T-cell (primary cell): ENCODE measurements at regions of chr16 and their contacts with region 1.

Region 1: DNA sequence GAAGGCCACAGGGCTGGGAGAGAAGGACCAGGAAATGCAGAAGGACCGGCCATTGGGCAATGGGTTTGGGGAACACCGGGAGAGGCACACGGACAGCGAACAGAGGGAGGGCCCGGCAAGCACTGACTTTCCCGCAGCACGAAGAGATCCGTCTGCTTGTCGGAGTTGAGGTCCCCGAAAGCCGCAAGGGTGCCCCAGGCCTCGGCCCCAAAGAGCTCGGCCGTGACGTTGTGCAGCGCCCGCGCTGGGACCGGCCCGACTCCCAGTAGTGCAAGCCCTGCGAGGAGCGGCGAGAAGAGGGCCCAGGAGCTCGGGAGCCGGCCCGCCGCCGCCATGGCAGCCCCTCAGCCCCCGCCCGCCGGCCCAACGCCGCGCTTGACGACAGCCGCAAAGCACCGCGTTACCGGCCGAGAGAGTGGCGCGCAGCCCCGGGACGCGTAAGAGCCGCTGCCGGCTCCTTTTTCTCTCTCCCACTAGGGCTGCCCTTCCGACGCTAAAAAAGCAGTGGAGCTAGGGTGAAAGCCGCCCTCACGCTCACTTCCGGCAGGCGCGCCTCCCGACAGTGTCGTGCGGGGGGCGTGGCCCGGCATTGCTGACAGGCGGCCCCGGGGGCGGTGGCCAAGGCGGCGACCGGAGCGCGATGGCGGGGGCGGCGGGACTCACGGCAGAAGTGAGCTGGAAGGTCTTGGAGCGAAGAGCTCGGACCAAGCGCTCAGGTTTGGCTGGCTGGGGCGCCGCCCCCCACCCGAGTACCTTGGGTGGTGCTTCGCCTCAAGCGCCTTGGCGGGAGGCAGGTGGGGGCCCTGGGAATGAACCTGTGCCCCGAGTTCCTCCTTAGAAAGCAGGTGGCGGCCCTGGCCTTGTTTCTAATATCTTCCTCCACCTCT is at the starts of genes ITFG1 and PHKB:
- DNase-seq: peak; percentile 91 to 98 (median 97)
- ATAC-seq: peak; percentile 93 to 96 (median 96)
- H3K4me3 ChIP-seq: peak within 1 kb of the TSS; percentile 73 to 99
- H3K4me3 Mint-ChIP-seq: peak within 1 kb of the TSS; percentile 92 to 98 (median 93)
- H3K27ac ChIP-seq: peak within 1 kb of the TSS; percentile 92
- H3K27ac Mint-ChIP-seq: peak within 1 kb of the TSS; percentile 91 to 97
- H3K4me1 ChIP-seq: peaks cover 19 to 32% of the 10 kb centered on the region in 2 experiments
- H3K4me1 Mint-ChIP-seq: peaks cover 68 to 74% (median 73%) of the 10 kb centered on the region in 3 donors
- H3K27me3 ChIP-seq: no peaks in the 10 kb centered on the region
- H3K27me3 Mint-ChIP-seq: no peaks in the 10 kb centered on the region
- total RNA-seq, gene ITFG1: 17.6 to 33.9 (median 22.6) TPM
- total RNA-seq, gene PHKB: 40.6 to 67.5 (median 48.8) TPM

Region 2: DNA sequence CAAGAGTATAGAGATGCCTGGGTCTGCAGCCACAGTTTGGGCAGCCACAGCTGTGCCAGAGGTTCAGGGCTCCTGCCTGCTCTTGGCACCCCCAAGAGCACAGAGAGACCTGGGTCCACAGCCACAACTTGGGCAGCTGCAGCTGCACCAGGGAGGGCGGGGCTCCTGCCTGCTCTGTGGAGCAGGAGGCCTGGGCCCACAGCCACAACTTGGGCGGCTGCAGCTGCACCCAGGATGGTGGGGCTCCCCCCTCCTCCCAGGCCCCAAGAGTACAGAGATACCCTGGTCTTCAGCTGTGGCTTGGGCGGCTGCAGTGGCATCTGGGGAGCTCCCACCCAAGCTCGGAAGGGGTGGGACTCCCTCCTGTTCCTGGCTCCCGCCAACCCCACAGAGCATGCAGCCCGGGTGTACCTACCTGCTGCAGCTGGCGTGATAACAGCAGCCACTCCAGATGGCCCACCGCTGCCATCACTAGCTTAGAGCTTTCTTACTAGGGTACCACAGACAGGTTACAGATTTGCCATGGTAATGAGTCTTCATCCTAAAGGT is 72.9 kb after region 1 on chr16:
- CTCF ChIA-PET with region 1: no interaction called
- POLR2A ChIA-PET with region 1: interaction called in 1 of 2 experiments, 10 read pairs
- DNase-seq: no peak
- ATAC-seq: no peak
- H3K4me3 ChIP-seq: no peak overlapping the region
- H3K4me3 Mint-ChIP-seq: no peak overlapping the region
- H3K27ac ChIP-seq: no peak overlapping the region
- H3K27ac Mint-ChIP-seq: no peak overlapping the region
- H3K4me1 ChIP-seq: no peaks in the 10 kb centered on the region
- H3K4me1 Mint-ChIP-seq: peaks cover 4 to 14% (median 12%) of the 10 kb centered on the region in 3 donors
- H3K27me3 ChIP-seq: no peaks in the 10 kb centered on the region
- H3K27me3 Mint-ChIP-seq: no peaks in the 10 kb centered on the region

Region 3: DNA sequence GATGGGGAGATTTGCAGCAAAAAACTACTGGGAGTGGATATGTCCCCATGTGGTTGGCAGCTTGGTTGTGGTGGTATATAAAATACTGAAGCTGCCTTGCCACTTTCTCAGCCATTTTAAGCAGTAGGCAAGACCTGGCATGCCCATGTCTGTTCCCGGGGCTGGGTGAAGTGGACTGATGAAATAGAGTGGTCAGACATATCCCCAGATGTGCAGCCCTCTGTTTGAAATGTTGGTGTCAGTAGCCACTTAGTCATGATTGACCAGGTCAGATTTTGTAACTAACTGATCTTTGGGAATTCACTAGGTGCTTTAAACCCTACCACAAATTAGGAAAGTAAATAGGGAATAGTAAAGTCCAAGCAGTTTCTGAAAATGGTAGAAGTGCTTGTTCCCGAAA is 151.8 kb after region 1 on chr16:
- CTCF ChIA-PET with region 1: no interaction called
- POLR2A ChIA-PET with region 1: interaction called in 1 of 2 experiments, 13 read pairs
- DNase-seq: no peak
- ATAC-seq: no peak
- H3K4me3 ChIP-seq: no peak overlapping the region
- H3K4me3 Mint-ChIP-seq: no peak overlapping the region
- H3K27ac ChIP-seq: no peak overlapping the region
- H3K27ac Mint-ChIP-seq: no peak overlapping the region
- H3K4me1 ChIP-seq: no peaks in the 10 kb centered on the region
- H3K4me1 Mint-ChIP-seq: peaks cover 0 to 15% (median 4%) of the 10 kb centered on the region in 3 donors
- H3K27me3 ChIP-seq: no peaks in the 10 kb centered on the region
- H3K27me3 Mint-ChIP-seq: no peaks in the 10 kb centered on the region